ENCODE measurements at regions of chr2 and their contacts with region 1.

Region 1: GRCh38 chr2:33583194-33583938 is 15.7 kb downstream of the FAM98A start:
- DNase-seq: peak in 1 of 2 experiments; percentile 34
- H3K4me3 ChIP-seq: no peak overlapping the region
- H3K27ac ChIP-seq: no peak overlapping the region
- H3K4me1 ChIP-seq: no peaks in the 10 kb centered on the region
- H3K27me3 ChIP-seq: no peaks in the 10 kb centered on the region
- CTCF ChIP-seq: peak; percentile 91

Region 2: GRCh38 chr2:32895424-32895823 is 687.9 kb before region 1 on chr2:
- CTCF ChIA-PET with region 1: no interaction called
- POLR2A ChIA-PET with region 1: no interaction called
- intact Hi-C with region 1: no loop called
- DNase-seq: no peak
- H3K4me3 ChIP-seq: no peak overlapping the region
- H3K27ac ChIP-seq: no peak overlapping the region
- H3K4me1 ChIP-seq: no peaks in the 10 kb centered on the region
- H3K27me3 ChIP-seq: no peaks in the 10 kb centered on the region
- CTCF ChIP-seq: no peak

Region 3: DNA sequence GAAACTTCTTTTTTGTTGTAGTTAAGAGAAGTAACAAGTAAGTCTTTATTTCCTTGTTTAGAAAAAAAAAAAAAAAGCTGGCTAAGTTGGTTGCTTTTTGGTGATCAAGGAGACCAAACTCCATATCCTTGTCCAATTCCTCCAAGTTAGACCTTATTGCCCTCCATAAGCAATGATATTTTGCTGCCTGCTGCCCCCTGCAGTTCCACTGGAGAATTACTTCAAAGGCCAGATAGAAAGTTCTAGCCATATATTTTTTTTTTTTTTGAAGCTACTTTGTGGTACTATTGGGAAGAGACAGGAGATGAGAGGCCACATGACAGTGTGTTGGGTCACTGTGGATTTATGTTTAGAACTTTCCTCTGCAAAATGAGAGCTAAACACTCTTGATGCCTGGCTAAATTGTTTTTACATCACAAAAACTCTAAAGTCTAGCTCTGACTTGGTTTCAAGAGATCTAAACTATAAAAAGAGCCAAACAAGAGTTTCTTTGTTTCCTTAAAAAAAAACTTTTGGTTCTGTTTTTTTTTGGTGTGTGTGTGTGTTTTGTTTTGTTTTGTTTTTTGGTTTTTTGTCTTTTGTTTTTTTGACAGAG is 187.6 kb before region 1 on chr2:
- CTCF ChIA-PET with region 1: no interaction called
- POLR2A ChIA-PET with region 1: no interaction called
- intact Hi-C with region 1: loop called (anchors 10 kb)
- DNase-seq: peak in 1 of 2 experiments; percentile 53
- H3K4me3 ChIP-seq: no peak overlapping the region
- H3K27ac ChIP-seq: no peak overlapping the region
- H3K4me1 ChIP-seq: no peaks in the 10 kb centered on the region
- H3K27me3 ChIP-seq: no peaks in the 10 kb centered on the region
- CTCF ChIP-seq: peak; percentile 82

Region 4: GRCh38 chr2:33412920-33413319 is 170.4 kb before region 1 on chr2:
- CTCF ChIA-PET with region 1: interaction called, 10 read pairs
- POLR2A ChIA-PET with region 1: no interaction called
- intact Hi-C with region 1: no loop called
- DNase-seq: no peak
- H3K4me3 ChIP-seq: no peak overlapping the region
- H3K27ac ChIP-seq: no peak overlapping the region
- H3K4me1 ChIP-seq: no peaks in the 10 kb centered on the region
- H3K27me3 ChIP-seq: no peaks in the 10 kb centered on the region
- CTCF ChIP-seq: peak; percentile 35; the same call in 1 of the 2 replicates

Region 5: GRCh38 chr2:33475224-33476130 is 107.9 kb before region 1 on chr2:
- CTCF ChIA-PET with region 1: no interaction called
- POLR2A ChIA-PET with region 1: no interaction called
- intact Hi-C with region 1: loop called (anchors 5 kb)
- DNase-seq: peak; percentile 69 to 92
- H3K4me3 ChIP-seq: peak overlapping the region; percentile 72
- H3K27ac ChIP-seq: peak overlapping the region; percentile 75
- H3K4me1 ChIP-seq: peaks cover 15% of the 10 kb centered on the region
- H3K27me3 ChIP-seq: no peaks in the 10 kb centered on the region
- CTCF ChIP-seq: peak; percentile 88

Region 6: DNA sequence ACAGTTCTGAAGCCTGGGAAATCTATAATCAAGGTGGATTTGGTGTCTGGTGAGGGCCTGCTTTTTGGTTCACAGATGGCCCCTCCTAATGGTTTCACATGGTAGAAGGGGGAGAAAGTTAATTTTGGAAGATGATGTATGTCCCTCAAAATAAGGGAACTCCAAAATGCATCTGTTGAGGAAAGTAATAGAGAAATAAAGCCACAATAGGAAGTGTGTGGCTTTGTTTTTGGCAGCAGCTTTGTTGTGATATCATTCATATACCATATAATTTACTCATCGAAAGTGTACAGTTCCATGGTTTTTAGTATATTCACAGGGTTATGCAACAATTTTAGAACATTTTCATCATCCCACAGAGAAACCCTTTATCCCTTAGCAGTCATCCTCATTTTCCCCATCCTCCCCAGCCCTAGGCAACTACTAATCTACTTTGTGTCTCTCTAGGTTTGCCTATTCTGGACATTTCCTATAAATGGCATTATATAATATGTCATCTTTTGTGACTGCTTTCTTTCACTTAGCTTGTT is 289.8 kb after region 1 on chr2:
- CTCF ChIA-PET with region 1: no interaction called
- POLR2A ChIA-PET with region 1: no interaction called
- intact Hi-C with region 1: no loop called
- DNase-seq: no peak
- H3K4me3 ChIP-seq: no peak overlapping the region
- H3K27ac ChIP-seq: no peak overlapping the region
- H3K4me1 ChIP-seq: no peaks in the 10 kb centered on the region
- H3K27me3 ChIP-seq: no peaks in the 10 kb centered on the region
- CTCF ChIP-seq: no peak

Measured in PC-9 (cell line).